ENCODE measurements at regions of chr12 and their contacts with region 1.

Region 1: DNA sequence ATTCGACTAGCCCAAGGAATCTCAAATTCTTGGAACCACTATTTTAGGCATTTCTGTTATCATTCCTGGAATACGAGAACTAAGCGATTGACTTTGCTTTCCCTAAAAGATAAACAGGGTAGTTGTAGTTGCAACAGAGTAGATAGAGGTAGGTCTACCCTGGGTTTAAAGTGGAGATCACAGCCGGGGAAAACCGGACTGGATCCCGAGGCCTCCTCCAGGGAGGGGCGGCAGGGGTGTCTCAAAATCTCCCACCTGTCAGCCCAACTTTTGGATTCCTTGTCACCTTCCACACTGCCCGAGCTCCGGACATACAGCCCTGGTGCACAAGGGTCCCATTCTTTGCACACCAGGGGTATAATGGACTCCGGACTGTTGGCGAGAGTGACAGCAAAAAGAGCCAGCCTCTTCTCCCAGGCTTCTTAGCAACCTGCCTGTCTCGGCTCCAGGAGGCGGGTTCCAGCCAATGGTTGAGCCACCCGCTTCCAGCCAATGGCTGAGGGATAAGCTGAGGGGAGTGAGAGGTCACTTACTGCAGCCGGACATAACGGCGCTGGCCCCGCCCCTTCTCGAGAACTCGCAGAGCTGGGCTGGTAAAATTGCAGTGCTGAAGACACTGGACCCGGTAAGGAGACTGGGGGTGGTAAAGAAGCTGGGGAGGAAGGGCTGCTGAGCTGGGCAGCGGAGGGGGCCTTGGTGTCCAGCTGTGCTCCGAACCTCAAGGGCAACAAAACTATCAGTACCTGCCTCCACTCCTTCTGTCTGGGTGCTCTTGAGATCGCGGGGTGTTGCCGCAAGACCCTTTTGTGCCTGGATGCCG is at the start of gene SUOX:
- DNase-seq: peak; percentile 98
- H3K4me3 ChIP-seq: peak within 1 kb of the TSS; percentile 17 to 73 (median 40)
- H3K27ac ChIP-seq: no peak within 1 kb of the TSS
- H3K4me1 ChIP-seq: peaks cover 10% of the 10 kb centered on the region
- H3K27me3 ChIP-seq: no peaks in the 10 kb centered on the region
- CTCF ChIP-seq: no peak
- POLR2A ChIP-seq: peak; percentile 85
- total RNA-seq, gene SUOX: 24.3 and 24.8 TPM in 2 replicates

Region 2: DNA sequence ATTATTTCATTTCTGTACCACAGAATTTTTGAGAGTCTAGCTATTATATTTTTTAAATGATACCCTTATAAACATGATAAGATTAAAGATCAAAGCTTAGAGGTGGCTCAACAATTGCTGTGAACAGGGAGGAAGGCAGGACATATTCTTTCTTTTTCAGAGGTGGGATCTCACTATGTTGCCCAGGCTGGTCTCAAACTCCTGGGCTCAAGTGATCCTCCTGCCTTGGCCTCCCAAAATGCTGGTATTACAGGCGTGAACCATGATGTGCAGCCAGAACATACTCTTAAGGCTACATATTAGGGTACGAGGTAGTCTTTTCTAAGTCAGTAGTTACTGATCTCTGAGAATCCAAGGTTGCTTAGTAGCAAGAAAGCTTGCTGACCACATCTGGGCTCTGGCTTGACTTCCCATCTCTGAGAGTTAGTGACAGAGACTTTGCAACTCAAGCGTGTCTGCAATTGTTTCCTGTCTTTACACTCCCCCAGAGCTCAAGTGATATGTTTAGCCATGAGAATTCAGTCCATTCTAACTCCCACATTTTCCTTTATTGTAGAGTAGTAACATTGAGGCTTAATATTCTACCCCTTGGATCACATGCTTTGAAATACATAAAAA is 14.5 kb before region 1 on chr12:
- CTCF ChIA-PET with region 1: interaction called, 20 read pairs
- POLR2A ChIA-PET with region 1: no interaction called
- dilution Hi-C with region 1: no loop called
- intact Hi-C with region 1: no loop called
- DNase-seq: no peak
- H3K4me3 ChIP-seq: no peak overlapping the region
- H3K27ac ChIP-seq: no peak overlapping the region
- H3K4me1 ChIP-seq: peaks cover 5% of the 10 kb centered on the region
- H3K27me3 ChIP-seq: no peaks in the 10 kb centered on the region
- CTCF ChIP-seq: no peak
- POLR2A ChIP-seq: no peak

Region 3: GRCh38 chr12:56041552-56042429 is 44.9 kb after region 1 on chr12 and contains the start of gene RPS26:
- CTCF ChIA-PET with region 1: interaction called, 44 read pairs
- POLR2A ChIA-PET with region 1: interaction called, 5 read pairs
- dilution Hi-C with region 1: no loop called
- intact Hi-C with region 1: loop called (anchors 1 kb)
- DNase-seq: peak; percentile 100
- H3K4me3 ChIP-seq: peak within 1 kb of the TSS; percentile 84 to 100 (median 87)
- H3K27ac ChIP-seq: peak within 1 kb of the TSS; percentile 95
- H3K4me1 ChIP-seq: peaks cover 17% of the 10 kb centered on the region
- H3K27me3 ChIP-seq: no peaks in the 10 kb centered on the region
- CTCF ChIP-seq: peak in 1 of 2 donors; percentile 46
- POLR2A ChIP-seq: peak; percentile 99
- total RNA-seq, gene RPS26: 57.3 and 66.7 TPM in 2 replicates

Region 4: GRCh38 chr12:56084958-56085543 is 88.1 kb after region 1 on chr12:
- CTCF ChIA-PET with region 1: interaction called, 14 read pairs
- POLR2A ChIA-PET with region 1: no interaction called
- dilution Hi-C with region 1: no loop called
- intact Hi-C with region 1: no loop called
- DNase-seq: peak; percentile 20
- H3K4me3 ChIP-seq: no peak overlapping the region
- H3K27ac ChIP-seq: no peak overlapping the region
- H3K4me1 ChIP-seq: peaks cover 16% of the 10 kb centered on the region
- H3K27me3 ChIP-seq: peaks cover 4 to 8% of the 10 kb centered on the region in 2 experiments
- CTCF ChIP-seq: peak; percentile 40 to 58
- POLR2A ChIP-seq: no peak

Measured in endothelial cell of umbilical vein (primary cell).